Ascending aorta (tissue), 2 donors: ENCODE measurements at regions of chr14 and their contacts with region 1.

Region 1: DNA sequence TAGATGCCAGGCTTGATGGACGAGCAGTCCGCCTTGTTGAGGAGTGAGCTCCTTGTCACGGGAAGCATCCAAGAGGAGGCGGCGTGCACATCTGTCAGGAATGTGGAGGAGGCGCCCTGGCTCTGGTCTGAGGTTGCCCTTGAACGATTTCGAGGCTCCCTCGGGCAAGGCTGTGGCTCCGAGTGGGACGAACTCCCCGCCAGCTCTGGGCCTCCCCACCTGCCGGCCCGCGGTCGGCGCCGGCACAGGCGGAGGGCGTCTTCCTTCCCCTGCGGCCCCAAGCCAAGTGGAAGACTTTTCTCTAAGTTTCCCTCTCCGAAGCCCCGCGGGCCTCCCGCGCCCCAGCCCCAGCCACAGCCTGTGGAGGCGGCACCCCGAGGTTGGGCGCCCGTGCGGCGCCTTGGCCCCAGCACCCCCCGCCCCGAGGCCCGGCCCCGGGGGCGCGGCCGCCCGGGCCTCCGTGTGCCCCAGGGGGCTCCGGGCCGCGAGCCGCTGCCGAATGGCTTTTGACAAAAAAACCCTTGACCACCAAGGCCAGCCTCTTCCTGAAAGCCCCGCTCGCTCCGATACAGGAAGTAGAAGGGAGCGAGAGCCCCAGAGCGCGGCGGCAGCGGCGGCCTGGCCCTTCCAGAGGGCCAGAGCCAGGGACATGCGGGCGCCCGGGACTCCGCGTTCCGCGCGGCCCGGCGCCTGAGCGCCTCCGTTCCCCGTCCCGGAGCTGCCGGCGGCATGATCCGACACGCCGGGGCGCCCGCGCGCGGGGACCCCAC is at the start of gene RIN3:
- DNase-seq: peak in 1 of 2 donors; percentile 80
- H3K4me3 ChIP-seq: peak within 1 kb of the TSS; percentile 68 to 71
- H3K27ac ChIP-seq: peak within 1 kb of the TSS; percentile 81 to 84
- H3K4me1 ChIP-seq: peaks cover 3 to 18% of the 10 kb centered on the region in 2 donors
- H3K27me3 ChIP-seq: no peaks in the 10 kb centered on the region
- CTCF ChIP-seq: no peak
- total RNA-seq, gene RIN3: 30.3 TPM

Region 2: DNA sequence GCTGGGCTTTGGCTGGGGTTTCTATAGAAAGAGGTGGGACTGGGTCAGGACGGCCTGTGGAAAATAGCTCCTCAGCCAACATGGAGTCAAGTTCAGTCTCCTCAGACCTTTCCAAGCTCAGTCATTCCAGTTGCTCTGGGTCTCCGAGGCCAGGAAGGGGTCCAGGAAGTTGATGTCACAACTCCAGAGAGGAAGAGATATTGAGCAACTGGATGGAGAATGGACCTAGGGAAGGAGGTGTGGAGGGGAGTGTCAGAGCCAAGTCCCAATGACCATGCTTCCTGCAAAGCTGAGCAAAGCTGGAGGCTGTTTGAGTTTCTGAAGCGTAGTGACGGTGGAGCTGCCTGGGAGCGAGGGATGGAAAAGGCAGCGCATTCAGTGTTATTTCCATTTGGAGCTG is 104.3 kb before region 1 on chr14:
- intact Hi-C with region 1: no loop called
- DNase-seq: peak in 1 of 2 donors; percentile 70
- H3K4me3 ChIP-seq: no peak overlapping the region
- H3K27ac ChIP-seq: peak overlapping the region; percentile 41 to 52
- H3K4me1 ChIP-seq: peaks cover 0 to 12% of the 10 kb centered on the region in 2 donors
- H3K27me3 ChIP-seq: no peaks in the 10 kb centered on the region
- CTCF ChIP-seq: no peak

Region 3: GRCh38 chr14:92460916-92461579 is 52.3 kb before region 1 on chr14:
- intact Hi-C with region 1: no loop called
- DNase-seq: peak in 1 of 2 donors; percentile 78
- H3K4me3 ChIP-seq: peak overlapping the region in 1 of 2 donors; percentile 18
- H3K27ac ChIP-seq: peak overlapping the region; percentile 72 to 73
- H3K4me1 ChIP-seq: peaks cover 6 to 12% of the 10 kb centered on the region in 2 donors
- H3K27me3 ChIP-seq: no peaks in the 10 kb centered on the region
- CTCF ChIP-seq: peak in 1 of 3 experiments; percentile 33

Region 4: DNA sequence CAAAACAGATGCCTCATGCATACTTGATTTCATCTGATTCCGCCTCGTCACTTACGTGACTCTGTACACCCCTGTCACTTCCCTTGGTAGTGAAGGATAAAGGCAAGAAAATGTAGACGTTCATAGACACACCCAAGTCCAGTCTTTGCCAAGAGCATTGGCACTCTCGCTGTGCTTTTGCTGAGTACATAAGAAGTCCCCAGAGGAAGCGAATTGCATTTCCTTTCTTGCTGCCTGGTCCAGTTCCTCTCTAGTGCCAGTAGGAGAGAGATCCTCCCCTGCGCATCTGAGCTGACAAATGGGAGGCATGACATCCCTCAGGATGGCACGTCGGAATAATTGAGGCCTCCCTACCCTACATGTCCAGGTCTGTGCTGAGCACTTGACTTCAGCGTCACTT is 21.1 kb before region 1 on chr14:
- intact Hi-C with region 1: no loop called
- DNase-seq: peak in 1 of 2 donors; percentile 62
- H3K4me3 ChIP-seq: no peak overlapping the region
- H3K27ac ChIP-seq: peak overlapping the region in 1 of 2 donors; percentile 5
- H3K4me1 ChIP-seq: no peaks in the 10 kb centered on the region
- H3K27me3 ChIP-seq: no peaks in the 10 kb centered on the region
- CTCF ChIP-seq: peak in 1 of 3 experiments; percentile 8

Region 5: DNA sequence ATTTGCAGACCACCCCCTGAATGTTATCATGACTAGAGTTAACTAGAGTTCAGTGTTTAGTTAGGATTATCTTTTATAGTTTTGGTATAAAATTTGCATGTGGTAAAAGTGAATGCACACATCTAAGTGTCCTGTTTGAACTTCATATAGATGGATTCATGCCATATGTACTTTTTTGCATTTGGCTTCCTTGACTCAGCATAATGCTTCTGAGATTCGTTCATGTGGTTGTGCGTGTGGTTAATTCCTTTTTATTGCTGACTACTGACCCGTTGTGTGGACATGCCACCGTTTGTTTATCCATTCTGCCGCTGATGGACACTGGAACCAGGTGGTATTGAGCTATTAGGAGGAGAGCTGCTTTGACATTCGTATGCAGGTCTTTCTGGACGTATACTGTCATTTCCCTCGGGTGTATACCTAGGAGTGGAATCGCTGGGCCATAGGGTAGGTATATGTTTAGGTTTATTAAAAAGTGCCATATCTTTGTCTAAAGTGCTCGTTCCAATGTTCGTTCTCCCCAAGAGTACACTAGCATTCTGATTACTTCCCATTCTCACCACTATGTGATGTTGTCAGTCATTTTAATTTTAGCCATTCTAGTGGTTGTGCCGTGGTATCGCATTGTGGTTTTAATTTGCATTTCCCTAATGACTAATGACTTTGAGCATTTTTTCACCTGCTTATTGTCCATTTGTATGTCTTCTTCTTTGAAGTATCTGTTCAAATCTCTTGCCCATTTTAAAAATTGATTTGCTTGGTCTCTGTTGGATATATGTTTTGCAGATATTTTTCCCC is 37.9 kb after region 1 on chr14:
- intact Hi-C with region 1: loop called (anchors 5 kb)
- DNase-seq: no peak
- H3K4me3 ChIP-seq: no peak overlapping the region
- H3K27ac ChIP-seq: peak overlapping the region; percentile 87 to 93
- H3K4me1 ChIP-seq: peaks cover 16 to 45% of the 10 kb centered on the region in 2 donors
- H3K27me3 ChIP-seq: no peaks in the 10 kb centered on the region
- CTCF ChIP-seq: peak in 1 of 3 experiments; percentile 40

Region 6: GRCh38 chr14:92603309-92604242 is 90.2 kb after region 1 on chr14:
- intact Hi-C with region 1: loop called (anchors 2 kb)
- DNase-seq: peak; percentile 36 to 90
- H3K4me3 ChIP-seq: peak overlapping the region in 1 of 2 donors; percentile 12
- H3K27ac ChIP-seq: peak overlapping the region; percentile 91 to 92
- H3K4me1 ChIP-seq: peaks cover 18 to 25% of the 10 kb centered on the region in 2 donors
- H3K27me3 ChIP-seq: no peaks in the 10 kb centered on the region
- CTCF ChIP-seq: peak; percentile 46 to 66 (median 51)

Region 7: DNA sequence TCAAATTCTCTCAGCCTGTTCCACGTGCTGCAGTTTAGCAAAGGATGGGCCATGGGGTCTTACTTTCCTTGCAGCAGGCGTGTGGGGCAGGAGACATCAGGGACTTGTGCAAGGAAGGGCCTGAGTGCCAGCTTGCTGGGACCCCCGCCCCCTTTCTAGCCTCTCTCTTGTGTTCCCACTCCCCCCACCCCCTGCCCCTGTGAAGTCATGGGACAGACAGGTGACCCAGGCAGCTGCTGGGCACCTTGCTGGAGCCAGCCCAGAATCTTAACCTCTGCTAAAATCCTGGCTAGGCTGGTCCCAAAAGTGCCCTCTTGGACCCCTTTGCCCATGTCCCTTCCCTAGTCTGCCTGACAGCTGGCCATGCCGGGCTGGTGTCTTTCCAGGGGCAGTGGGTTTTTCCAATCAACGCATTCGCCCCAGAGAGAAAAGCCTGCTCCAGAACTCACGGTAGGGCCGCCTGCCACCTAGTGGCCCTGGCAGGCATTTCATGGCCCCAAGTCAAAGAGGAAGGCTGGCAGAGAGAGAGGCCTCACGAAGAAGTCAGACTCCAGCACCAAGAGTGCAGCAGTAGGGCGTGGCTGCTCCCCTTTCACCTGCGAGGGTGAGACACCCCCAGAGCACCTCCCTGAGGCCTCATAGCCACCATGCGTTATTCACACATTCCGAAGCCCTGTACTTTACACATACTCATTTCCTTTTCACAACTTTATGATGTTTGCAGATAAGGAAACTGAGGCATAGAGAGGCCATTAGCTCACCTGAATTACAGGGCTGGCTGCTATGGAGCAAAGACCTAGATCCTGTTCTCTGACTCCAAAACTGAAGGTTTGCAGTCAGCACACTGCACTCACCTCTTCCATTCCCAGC is 167.6 kb after region 1 on chr14:
- intact Hi-C with region 1: loop called (anchors 5 kb)
- DNase-seq: peak; percentile 50 to 86
- H3K4me3 ChIP-seq: no peak overlapping the region
- H3K27ac ChIP-seq: peak overlapping the region in 1 of 2 donors; percentile 65
- H3K4me1 ChIP-seq: no peaks in the 10 kb centered on the region
- H3K27me3 ChIP-seq: no peaks in the 10 kb centered on the region
- CTCF ChIP-seq: peak; percentile 87 to 98 (median 94)